ENCODE measurements at regions of chr12 and their contacts with region 1.

Region 1: GRCh38 chr12:104456417-104456949 is at the start of gene CHST11:
- DNase-seq: peak; percentile 40 to 88 (median 72)
- ATAC-seq: peak; percentile 64
- H3K4me3 ChIP-seq: peak within 1 kb of the TSS; percentile 88 to 97
- H3K4me3 Mint-ChIP-seq: peak within 1 kb of the TSS; percentile 99
- H3K27ac ChIP-seq: peak within 1 kb of the TSS; percentile 70 to 82
- H3K27ac Mint-ChIP-seq: peak within 1 kb of the TSS; percentile 96
- H3K4me1 ChIP-seq: peaks cover 39% of the 10 kb centered on the region
- H3K4me1 Mint-ChIP-seq: peaks cover 42% of the 10 kb centered on the region
- H3K27me3 ChIP-seq: no peaks in the 10 kb centered on the region
- H3K27me3 Mint-ChIP-seq: no peaks in the 10 kb centered on the region
- CTCF ChIP-seq: no peak
- total RNA-seq, gene CHST11: 29.1 to 35.5 TPM

Region 2: DNA sequence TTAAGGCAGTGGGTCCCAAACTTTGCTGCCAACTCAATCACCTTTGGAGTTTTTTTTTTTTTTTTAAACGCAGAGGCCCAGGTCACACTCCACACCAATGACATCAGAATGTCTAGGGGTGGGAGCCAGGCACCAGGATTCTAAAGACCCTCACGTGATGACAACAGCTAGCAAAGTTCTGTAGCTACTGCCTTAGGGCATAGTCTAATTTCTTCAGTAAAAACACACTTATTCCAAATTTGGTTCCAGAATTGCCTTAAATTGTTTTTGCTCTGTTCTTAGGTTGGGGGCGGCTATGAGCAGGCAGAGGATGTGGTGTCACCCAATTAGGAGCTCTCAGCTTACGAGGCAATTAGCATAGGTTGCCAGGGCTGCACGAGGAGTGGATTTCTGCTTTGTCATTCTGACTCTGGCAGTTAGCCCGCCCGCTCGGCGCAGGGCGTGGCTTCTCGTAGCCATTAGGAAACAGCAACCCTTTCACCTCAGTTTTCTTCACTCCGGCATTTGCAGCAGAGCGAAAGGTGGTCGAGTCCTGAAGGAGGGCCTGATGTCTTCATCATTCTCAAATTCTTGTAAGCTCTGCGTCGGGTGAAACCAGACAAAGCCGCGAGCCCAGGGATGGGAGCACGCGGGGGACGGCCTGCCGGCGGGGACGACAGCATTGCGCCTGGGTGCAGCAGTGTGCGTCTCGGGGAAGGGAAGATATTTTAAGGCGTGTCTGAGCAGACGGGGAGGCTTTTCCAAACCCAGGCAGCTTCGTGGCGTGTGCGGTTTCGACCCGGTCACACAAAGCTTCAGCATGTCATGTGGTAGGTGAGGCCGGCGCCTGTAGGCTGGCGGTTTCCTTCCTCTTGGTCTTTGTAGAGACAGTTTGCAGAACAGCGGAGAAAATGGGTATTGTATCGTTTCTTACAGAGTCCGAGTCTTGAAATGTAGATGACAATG is 169.7 kb before region 1 on chr12:
- CTCF ChIA-PET with region 1: interaction called, 3 read pairs
- POLR2A ChIA-PET with region 1: interaction called, 3 read pairs
- intact Hi-C with region 1: loop called in 1 of 2 experiments (anchors 5 kb)
- DNase-seq: peak; percentile 75 to 95 (median 88)
- ATAC-seq: peak; percentile 87
- H3K4me3 ChIP-seq: peak overlapping the region; percentile 80 to 86
- H3K4me3 Mint-ChIP-seq: peak overlapping the region; percentile 97
- H3K27ac ChIP-seq: peak overlapping the region; percentile 64 to 90
- H3K27ac Mint-ChIP-seq: peak overlapping the region; percentile 96
- H3K4me1 ChIP-seq: peaks cover 24% of the 10 kb centered on the region
- H3K4me1 Mint-ChIP-seq: peaks cover 35% of the 10 kb centered on the region
- H3K27me3 ChIP-seq: no peaks in the 10 kb centered on the region
- H3K27me3 Mint-ChIP-seq: no peaks in the 10 kb centered on the region
- CTCF ChIP-seq: no peak

Region 3: GRCh38 chr12:104433061-104433460 is 23.4 kb before region 1 on chr12:
- CTCF ChIA-PET with region 1: no interaction called
- POLR2A ChIA-PET with region 1: no interaction called
- intact Hi-C with region 1: no loop called
- DNase-seq: no peak
- ATAC-seq: no peak
- H3K4me3 ChIP-seq: no peak overlapping the region
- H3K4me3 Mint-ChIP-seq: no peak overlapping the region
- H3K27ac ChIP-seq: no peak overlapping the region
- H3K27ac Mint-ChIP-seq: no peak overlapping the region
- H3K4me1 ChIP-seq: no peaks in the 10 kb centered on the region
- H3K4me1 Mint-ChIP-seq: peaks cover 6% of the 10 kb centered on the region
- H3K27me3 ChIP-seq: no peaks in the 10 kb centered on the region
- H3K27me3 Mint-ChIP-seq: peaks cover 3% of the 10 kb centered on the region
- CTCF ChIP-seq: no peak

Region 4: DNA sequence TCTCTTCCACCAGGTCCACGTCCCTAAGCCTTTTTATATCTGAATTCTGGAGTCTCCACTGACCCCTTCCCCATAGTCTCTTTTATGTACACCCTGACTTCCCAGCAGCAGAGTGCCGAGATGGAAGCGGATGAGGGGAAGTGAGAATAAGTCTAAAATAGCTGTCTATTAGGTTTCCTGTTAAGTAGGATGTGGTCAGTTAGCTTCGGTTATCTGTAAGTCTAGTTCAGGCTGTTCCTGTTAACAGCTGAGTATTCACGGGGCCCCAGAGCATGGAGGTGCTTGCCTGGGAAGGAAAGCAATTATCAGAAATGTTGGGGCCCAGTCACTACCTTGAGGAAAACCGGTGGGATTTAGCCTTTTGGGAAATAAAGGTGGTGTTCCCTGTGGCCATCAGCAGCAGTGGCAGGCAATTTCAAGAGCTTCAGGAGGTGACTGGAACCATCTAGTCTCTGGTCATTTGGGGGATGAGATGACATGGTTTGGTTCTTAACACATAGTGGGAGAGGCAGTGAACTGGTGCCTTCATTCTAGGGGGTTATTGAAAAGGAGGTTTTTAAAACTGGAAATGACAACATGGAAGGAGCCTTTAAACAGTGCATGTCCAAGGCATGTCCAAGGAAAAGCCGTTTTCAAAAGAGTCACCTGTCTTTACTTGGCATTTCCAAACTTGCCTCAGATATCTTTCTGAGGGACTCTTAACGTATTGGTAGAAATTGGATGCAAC is 22.1 kb after region 1 on chr12:
- CTCF ChIA-PET with region 1: interaction called, 6 read pairs
- POLR2A ChIA-PET with region 1: interaction called, 25 read pairs
- intact Hi-C with region 1: loop called in 1 of 2 experiments (anchors 2 kb)
- DNase-seq: peak in 5 of 9 experiments; percentile 42 to 83 (median 64)
- ATAC-seq: peak; percentile 76
- H3K4me3 ChIP-seq: peak overlapping the region; percentile 39 to 43
- H3K4me3 Mint-ChIP-seq: peak overlapping the region; percentile 85
- H3K27ac ChIP-seq: peak overlapping the region; percentile 45 to 70
- H3K27ac Mint-ChIP-seq: peak overlapping the region; percentile 93
- H3K4me1 ChIP-seq: peaks cover 76% of the 10 kb centered on the region
- H3K4me1 Mint-ChIP-seq: peaks cover 85% of the 10 kb centered on the region
- H3K27me3 ChIP-seq: no peaks in the 10 kb centered on the region
- H3K27me3 Mint-ChIP-seq: no peaks in the 10 kb centered on the region
- CTCF ChIP-seq: no peak

Region 5: DNA sequence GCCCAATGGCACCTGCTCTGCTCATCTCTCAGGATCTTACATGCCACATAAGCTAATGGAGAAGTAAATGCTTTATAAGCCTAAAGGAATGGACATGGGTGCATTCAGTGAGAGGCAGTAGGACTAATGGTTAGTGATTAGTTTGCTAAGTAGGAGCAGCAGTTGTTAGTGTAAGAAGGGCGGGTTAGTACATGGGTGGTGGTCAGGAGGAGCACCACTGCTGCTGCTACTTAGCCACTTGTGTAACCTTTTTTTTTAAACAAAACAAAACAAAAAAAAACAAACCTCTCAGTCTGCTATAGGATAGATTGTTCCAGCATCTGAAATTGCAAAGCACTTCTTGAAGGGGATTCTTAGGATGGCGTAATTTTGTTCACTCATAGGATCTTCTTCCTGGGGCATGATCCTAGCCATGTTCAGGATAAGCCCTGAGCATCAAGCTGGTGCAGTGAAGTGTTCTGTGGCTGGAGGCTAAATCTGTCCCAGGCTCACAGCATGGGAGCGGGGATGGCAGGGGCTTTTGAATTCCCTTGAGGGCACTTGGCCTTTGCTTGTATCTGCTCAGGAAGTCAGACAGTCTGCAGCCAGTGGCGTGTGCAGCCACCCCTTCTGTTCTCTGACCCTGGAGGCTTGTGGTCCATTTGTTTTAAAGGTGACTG is 63.9 kb after region 1 on chr12:
- CTCF ChIA-PET with region 1: interaction called, 3 read pairs
- POLR2A ChIA-PET with region 1: no interaction called
- intact Hi-C with region 1: loop called in 1 of 2 experiments (anchors 2 kb)
- DNase-seq: no peak
- ATAC-seq: no peak
- H3K4me3 ChIP-seq: no peak overlapping the region
- H3K4me3 Mint-ChIP-seq: no peak overlapping the region
- H3K27ac ChIP-seq: no peak overlapping the region
- H3K27ac Mint-ChIP-seq: peak overlapping the region; percentile 10
- H3K4me1 ChIP-seq: peaks cover 40% of the 10 kb centered on the region
- H3K4me1 Mint-ChIP-seq: peaks cover 89% of the 10 kb centered on the region
- H3K27me3 ChIP-seq: no peaks in the 10 kb centered on the region
- H3K27me3 Mint-ChIP-seq: no peaks in the 10 kb centered on the region
- CTCF ChIP-seq: no peak

Region 6: GRCh38 chr12:104680066-104680465 is 223.6 kb after region 1 on chr12:
- CTCF ChIA-PET with region 1: no interaction called
- POLR2A ChIA-PET with region 1: no interaction called
- intact Hi-C with region 1: loop called (anchors 2 to 5 kb)
- DNase-seq: peak in 5 of 9 experiments; percentile 22 to 70 (median 58)
- ATAC-seq: peak; percentile 48
- H3K4me3 ChIP-seq: no peak overlapping the region
- H3K4me3 Mint-ChIP-seq: no peak overlapping the region
- H3K27ac ChIP-seq: no peak overlapping the region
- H3K27ac Mint-ChIP-seq: no peak overlapping the region
- H3K4me1 ChIP-seq: peaks cover 34% of the 10 kb centered on the region
- H3K4me1 Mint-ChIP-seq: peaks cover 56% of the 10 kb centered on the region
- H3K27me3 ChIP-seq: no peaks in the 10 kb centered on the region
- H3K27me3 Mint-ChIP-seq: no peaks in the 10 kb centered on the region
- CTCF ChIP-seq: peak; percentile 46

Region 7: DNA sequence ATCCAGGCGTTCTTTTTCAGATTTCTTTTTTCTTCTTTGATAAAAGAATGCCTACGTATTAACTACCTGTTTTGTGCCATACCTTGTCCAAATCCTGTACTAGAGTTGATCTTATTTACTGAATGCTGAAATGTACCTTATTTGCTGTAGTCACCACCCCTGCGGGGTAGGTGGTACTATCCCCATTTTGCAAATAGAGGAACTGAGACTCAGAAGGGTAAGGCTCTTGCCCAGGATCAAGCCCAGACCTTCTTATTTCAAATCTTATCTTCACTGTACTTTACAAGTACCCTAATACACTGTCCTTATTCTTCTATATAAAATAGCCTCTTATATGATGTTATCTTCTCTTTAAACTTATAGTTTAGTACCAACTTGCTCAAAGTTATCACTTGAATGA is 295.1 kb after region 1 on chr12:
- CTCF ChIA-PET with region 1: no interaction called
- POLR2A ChIA-PET with region 1: no interaction called
- intact Hi-C with region 1: no loop called
- DNase-seq: no peak
- ATAC-seq: no peak
- H3K4me3 ChIP-seq: no peak overlapping the region
- H3K4me3 Mint-ChIP-seq: no peak overlapping the region
- H3K27ac ChIP-seq: no peak overlapping the region
- H3K27ac Mint-ChIP-seq: no peak overlapping the region
- H3K4me1 ChIP-seq: peaks cover 19% of the 10 kb centered on the region
- H3K4me1 Mint-ChIP-seq: peaks cover 41% of the 10 kb centered on the region
- H3K27me3 ChIP-seq: no peaks in the 10 kb centered on the region
- H3K27me3 Mint-ChIP-seq: no peaks in the 10 kb centered on the region
- CTCF ChIP-seq: no peak

Region 8: DNA sequence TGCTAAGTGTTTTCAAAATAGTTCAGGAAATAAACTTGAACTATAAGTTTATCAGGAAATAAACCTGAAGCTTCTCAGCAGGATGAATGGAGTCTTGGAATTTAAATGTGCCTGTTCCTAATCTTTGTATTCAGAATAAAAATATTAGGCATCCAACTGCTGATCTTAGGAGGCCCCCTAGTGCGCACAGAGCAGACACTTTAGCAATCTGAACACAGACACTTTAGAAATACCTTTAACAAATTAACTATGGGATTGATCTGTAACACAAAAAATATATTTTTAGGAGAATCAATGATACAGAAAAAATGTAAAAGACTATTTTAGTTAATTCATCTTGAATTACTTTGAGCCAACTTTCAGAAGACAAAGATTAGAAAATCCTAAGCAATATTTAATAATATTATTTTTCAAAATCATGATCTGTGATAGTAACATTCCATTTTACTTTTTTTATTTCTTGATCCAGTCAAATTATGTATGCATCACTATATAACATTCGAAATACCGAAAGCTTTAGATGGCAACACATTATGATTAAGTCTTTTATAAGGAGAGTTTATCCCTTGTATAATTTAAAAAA is 420.7 kb after region 1 on chr12:
- CTCF ChIA-PET with region 1: no interaction called
- POLR2A ChIA-PET with region 1: no interaction called
- intact Hi-C with region 1: loop called in 1 of 2 experiments (anchors 2 kb)
- DNase-seq: peak; percentile 3 to 60 (median 31)
- ATAC-seq: no peak
- H3K4me3 ChIP-seq: no peak overlapping the region
- H3K4me3 Mint-ChIP-seq: no peak overlapping the region
- H3K27ac ChIP-seq: no peak overlapping the region
- H3K27ac Mint-ChIP-seq: no peak overlapping the region
- H3K4me1 ChIP-seq: no peaks in the 10 kb centered on the region
- H3K4me1 Mint-ChIP-seq: no peaks in the 10 kb centered on the region
- H3K27me3 ChIP-seq: no peaks in the 10 kb centered on the region
- H3K27me3 Mint-ChIP-seq: no peaks in the 10 kb centered on the region
- CTCF ChIP-seq: peak; percentile 83

Region 9: GRCh38 chr12:104986022-104986941 is 529.8 kb after region 1 on chr12 and contains the start of gene NOPCHAP1:
- CTCF ChIA-PET with region 1: no interaction called
- POLR2A ChIA-PET with region 1: no interaction called
- intact Hi-C with region 1: loop called in 1 of 2 experiments (anchors 5 kb)
- DNase-seq: peak; percentile 66 to 89 (median 82)
- ATAC-seq: peak; percentile 98
- H3K4me3 ChIP-seq: peak within 1 kb of the TSS; percentile 70 to 93
- H3K4me3 Mint-ChIP-seq: peak within 1 kb of the TSS; percentile 90
- H3K27ac ChIP-seq: peak within 1 kb of the TSS; percentile 33 to 55
- H3K27ac Mint-ChIP-seq: peak within 1 kb of the TSS; percentile 80
- H3K4me1 ChIP-seq: peaks cover 16% of the 10 kb centered on the region
- H3K4me1 Mint-ChIP-seq: peaks cover 35% of the 10 kb centered on the region
- H3K27me3 ChIP-seq: no peaks in the 10 kb centered on the region
- H3K27me3 Mint-ChIP-seq: no peaks in the 10 kb centered on the region
- CTCF ChIP-seq: no peak
- total RNA-seq, gene NOPCHAP1: 13.2 to 16.5 TPM